Esophagus muscularis mucosa (tissue), 4 donors: ENCODE measurements at regions of chr9 and their contacts with region 1.

Region 1: DNA sequence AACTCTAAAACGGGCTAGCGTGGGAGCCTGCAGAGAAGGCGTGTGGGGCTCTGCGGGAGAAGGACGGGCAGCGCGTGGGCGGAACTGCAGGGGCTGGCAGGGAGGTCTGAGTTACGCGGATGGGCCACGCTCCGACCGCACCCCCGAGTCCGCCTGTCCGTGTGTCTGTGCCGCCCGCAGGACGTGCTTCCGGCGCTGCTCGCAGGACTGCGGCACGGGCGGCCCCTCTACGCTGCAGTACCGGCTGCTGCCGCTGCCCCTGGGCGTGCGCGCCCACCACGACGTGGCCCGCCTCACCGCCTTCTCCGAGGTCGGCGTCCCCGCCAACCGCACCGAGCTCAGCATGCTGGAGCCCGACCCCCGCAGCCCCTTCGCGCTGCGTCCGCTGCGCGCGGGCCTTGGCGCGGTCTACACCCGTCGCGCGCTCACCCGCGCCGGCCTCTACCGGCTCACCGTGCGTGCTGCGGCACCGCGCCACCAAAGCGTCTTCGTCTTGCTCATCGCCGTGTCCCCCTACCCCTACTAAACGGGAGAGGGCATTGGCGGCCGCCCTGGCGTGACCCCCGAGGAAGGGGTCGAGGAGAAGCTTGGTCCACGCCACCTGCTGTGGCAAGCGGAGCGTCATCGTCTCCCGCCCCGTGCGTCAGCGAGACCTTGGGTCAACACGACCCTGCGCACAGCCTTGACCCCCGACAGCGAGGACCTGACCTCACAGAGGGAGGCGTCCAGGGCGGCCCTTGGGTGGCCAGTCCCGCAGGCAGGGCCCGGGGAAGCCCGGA is 11.4 kb upstream of the ASS1 start:
- DNase-seq: no peak
- H3K4me3 ChIP-seq: peak overlapping the region; percentile 47 to 58 (median 50)
- H3K27ac ChIP-seq: no peak overlapping the region
- H3K4me1 ChIP-seq: peaks cover 5 to 17% (median 13%) of the 10 kb centered on the region in 4 donors
- H3K27me3 ChIP-seq: peaks cover 0 to 20% (median 0%) of the 10 kb centered on the region in 4 donors
- CTCF ChIP-seq: peak; percentile 64 to 88 (median 67)
- EP300 ChIP-seq: no peak
- POLR2A ChIP-seq: no peak

Region 2: GRCh38 chr9:130243015-130243734 is 190.2 kb before region 1 on chr9:
- intact Hi-C with region 1: loop called (anchors 10 kb)
- DNase-seq: no peak
- H3K4me3 ChIP-seq: peak overlapping the region; percentile 27 to 48 (median 32)
- H3K27ac ChIP-seq: no peak overlapping the region
- H3K4me1 ChIP-seq: peaks cover 7 to 25% (median 22%) of the 10 kb centered on the region in 4 donors
- H3K27me3 ChIP-seq: no peaks in the 10 kb centered on the region
- CTCF ChIP-seq: peak; percentile 90 to 97 (median 94)
- EP300 ChIP-seq: no peak
- POLR2A ChIP-seq: no peak

Region 3: GRCh38 chr9:130382636-130383349 is 50.6 kb before region 1 on chr9:
- intact Hi-C with region 1: no loop called
- DNase-seq: no peak
- H3K4me3 ChIP-seq: no peak overlapping the region
- H3K27ac ChIP-seq: no peak overlapping the region
- H3K4me1 ChIP-seq: no peaks in the 10 kb centered on the region
- H3K27me3 ChIP-seq: no peaks in the 10 kb centered on the region
- CTCF ChIP-seq: no peak
- EP300 ChIP-seq: no peak
- POLR2A ChIP-seq: no peak